B cell (primary cell): ENCODE measurements at regions of chr16 and their contacts with region 1.

Region 1: DNA sequence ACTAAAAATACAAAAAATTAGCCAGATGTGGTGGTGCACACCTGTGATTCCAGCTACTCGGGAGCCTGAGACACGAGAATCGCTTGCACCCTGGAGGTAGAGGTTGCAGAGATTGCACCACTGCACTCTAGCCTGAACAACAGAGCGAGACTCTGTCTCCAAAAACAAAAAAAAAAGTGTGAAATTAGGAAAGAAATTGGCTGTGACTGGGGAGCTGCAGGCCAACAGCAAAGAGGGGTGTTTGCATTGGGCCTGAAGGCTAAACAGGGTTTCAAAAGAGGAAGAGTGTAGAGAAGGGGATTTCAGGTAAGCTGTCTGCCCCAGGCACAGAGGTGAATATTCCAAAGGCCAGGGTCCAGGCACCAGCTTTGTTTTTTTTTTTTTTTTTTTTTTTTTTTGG is 9.4 kb downstream of the BMERB1 start:
- DNase-seq: no peak
- ATAC-seq: no peak
- H3K4me3 ChIP-seq: no peak overlapping the region
- H3K4me3 Mint-ChIP-seq: no peak overlapping the region
- H3K27ac ChIP-seq: no peak overlapping the region
- H3K27ac Mint-ChIP-seq: no peak overlapping the region
- H3K4me1 ChIP-seq: no peaks in the 10 kb centered on the region
- H3K4me1 Mint-ChIP-seq: no peaks in the 10 kb centered on the region
- H3K27me3 ChIP-seq: peaks cover 0 to 3% (median 0%) of the 10 kb centered on the region in 4 experiments
- H3K27me3 Mint-ChIP-seq: peaks cover 4% of the 10 kb centered on the region
- CTCF ChIP-seq: no peak

Region 2: DNA sequence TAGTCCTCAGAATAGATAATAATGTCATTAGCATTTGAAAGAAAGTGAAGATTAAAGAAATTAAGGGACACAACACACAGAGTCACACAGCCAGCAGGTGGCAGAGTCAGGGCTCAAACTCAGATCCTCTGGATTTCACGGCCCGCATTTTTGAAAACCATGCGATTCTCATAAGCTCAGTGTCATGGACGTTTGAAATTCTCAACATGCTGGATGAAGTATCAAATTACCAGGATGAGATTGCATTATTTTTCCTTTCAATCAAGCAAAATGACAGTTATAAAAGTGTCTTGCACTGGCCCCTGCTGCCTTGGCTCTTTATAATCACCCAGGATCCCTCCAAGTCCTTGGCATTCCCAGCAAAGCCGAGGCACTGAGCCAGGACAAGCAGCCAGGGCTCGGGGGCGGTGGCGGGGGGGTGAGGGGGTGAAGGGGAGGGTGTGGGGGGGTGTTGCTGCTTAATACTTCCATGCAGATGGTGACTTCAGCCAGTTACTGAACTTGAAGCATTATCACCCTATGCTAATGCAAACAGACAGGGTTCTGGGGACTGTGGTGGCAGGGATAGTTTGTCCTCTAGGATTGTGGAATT is 16.0 kb before region 1 on chr16:
- CTCF ChIA-PET with region 1: interaction called, 15 read pairs
- POLR2A ChIA-PET with region 1: no interaction called
- intact Hi-C with region 1: no loop called
- DNase-seq: peak; percentile 61
- ATAC-seq: peak; percentile 56
- H3K4me3 ChIP-seq: no peak overlapping the region
- H3K4me3 Mint-ChIP-seq: no peak overlapping the region
- H3K27ac ChIP-seq: no peak overlapping the region
- H3K27ac Mint-ChIP-seq: no peak overlapping the region
- H3K4me1 ChIP-seq: peaks cover 0 to 3% of the 10 kb centered on the region in 2 donors
- H3K4me1 Mint-ChIP-seq: peaks cover 3% of the 10 kb centered on the region
- H3K27me3 ChIP-seq: no peaks in the 10 kb centered on the region
- H3K27me3 Mint-ChIP-seq: peaks cover 14% of the 10 kb centered on the region
- CTCF ChIP-seq: peak; percentile 63